Calu3 (cell line): ENCODE measurements at regions of chr7 and their contacts with region 1.

Region 1: GRCh38 chr7:105589356-105590077 is 8.2 kb upstream of the EFCAB10 start:
- DNase-seq: peak; percentile 60
- H3K4me3 Mint-ChIP-seq: no peak overlapping the region
- H3K27ac Mint-ChIP-seq: no peak overlapping the region
- H3K4me1 Mint-ChIP-seq: no peaks in the 10 kb centered on the region
- H3K27me3 Mint-ChIP-seq: no peaks in the 10 kb centered on the region
- CTCF ChIP-seq: peak; percentile 57

Region 2: DNA sequence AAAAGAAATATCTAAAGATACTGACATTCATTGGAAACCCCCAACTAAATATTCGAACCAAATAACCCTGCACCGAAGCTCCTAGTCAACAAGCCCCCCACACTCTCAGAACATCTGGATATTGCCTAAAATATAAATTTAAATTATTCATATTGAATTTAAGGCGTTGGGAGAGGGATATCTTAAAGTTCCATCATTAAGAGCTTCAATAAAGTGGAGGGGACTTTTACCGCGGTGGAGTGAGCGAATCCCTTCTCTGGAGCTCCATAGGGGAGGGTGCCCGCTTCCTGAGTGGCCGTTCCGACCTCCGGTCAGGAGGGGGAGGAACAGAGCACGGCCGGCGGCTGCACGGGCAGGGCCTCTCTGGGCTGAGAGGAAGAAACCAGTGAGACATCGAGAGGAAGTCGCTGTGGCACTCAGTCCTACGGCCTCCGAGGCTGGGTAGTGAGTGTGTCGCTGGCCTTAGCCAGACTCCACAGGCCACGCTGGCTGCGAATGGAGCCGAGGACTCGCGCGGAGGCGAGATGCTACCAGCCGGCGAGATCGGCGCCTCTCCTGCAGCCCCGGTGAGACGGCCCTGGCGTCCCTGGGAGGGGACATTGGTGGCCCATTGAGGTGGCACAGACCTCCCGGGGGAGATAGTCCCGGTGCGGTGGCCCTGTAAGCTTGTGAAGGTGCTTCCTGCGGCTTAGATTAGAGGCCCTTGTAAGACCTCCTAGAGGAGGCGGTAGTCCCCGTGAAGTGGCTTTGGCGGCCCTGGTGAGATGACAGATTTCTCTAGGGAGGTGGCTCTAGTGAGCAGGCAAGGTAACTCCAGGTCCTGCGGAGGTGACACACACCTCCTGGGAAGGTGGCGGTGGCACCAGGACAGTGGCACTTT is 57.5 kb before region 1 on chr7 and contains the start of gene RINT1:
- CTCF ChIA-PET with region 1: interaction called, 7 read pairs
- intact Hi-C with region 1: loop called (anchors 5 kb)
- DNase-seq: peak; percentile 95
- H3K4me3 Mint-ChIP-seq: peak within 1 kb of the TSS; percentile 82
- H3K27ac Mint-ChIP-seq: peak within 1 kb of the TSS; percentile 76
- H3K4me1 Mint-ChIP-seq: peaks cover 20% of the 10 kb centered on the region
- H3K27me3 Mint-ChIP-seq: no peaks in the 10 kb centered on the region
- CTCF ChIP-seq: peak; percentile 43
- total RNA-seq, gene RINT1: 17.1 and 18.6 TPM in 2 replicates

Region 3: GRCh38 chr7:106041140-106041717 is 451.7 kb after region 1 on chr7:
- CTCF ChIA-PET with region 1: no interaction called
- intact Hi-C with region 1: loop called (anchors 5 kb)
- DNase-seq: peak; percentile 61
- H3K4me3 Mint-ChIP-seq: no peak overlapping the region
- H3K27ac Mint-ChIP-seq: no peak overlapping the region
- H3K4me1 Mint-ChIP-seq: peaks cover 9% of the 10 kb centered on the region
- H3K27me3 Mint-ChIP-seq: peaks cover 36% of the 10 kb centered on the region
- CTCF ChIP-seq: peak; percentile 76